Dorsolateral prefrontal cortex (tissue), 120 donors: ENCODE measurements at regions of chr17 and their contacts with region 1.

Region 1: DNA sequence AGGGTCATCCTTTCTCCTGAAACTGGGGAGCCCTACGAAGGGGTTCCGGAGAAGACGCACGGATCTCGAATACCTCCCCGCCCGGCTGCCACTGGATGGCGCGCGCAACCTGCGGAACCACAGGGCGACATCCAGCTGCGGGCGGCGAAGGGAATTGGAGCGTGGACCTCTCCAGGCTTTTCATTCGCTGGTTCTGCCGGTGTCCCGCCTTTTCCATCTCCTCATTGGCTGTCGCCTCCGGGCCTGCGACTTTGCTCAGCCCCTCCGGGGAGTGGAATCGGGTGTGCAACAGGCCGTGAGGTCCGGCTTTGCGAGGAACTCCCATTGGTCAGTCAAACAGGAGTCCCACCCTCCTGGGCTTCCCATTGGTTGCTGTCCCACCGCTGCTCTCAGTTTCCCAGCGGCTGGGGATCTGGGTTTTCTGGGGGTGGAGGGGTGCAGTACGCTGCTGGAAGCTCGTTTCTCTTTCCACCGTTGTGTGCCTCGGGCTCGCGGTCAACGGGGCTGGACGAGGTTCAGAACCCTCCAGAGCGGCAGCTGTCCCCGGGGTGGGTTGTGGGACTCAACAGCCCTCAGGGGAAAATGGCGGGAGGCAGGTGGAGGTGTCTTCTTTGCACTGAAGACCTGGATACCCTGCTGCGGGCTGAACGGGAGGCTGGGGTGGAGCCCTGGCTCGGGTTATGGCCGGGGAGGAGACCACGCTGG is 14.5 kb downstream of the OR1D5 start:
- DNase-seq: peak; percentile 95 to 99 (median 98)
- H3K4me3 ChIP-seq: peak overlapping the region; percentile 35 to 96 (median 83)
- H3K27ac ChIP-seq: peak overlapping the region in 57 of 59 donors; percentile 1 to 92 (median 82)
- H3K27me3 ChIP-seq: no peaks in the 10 kb centered on the region
- CTCF ChIP-seq: peak; percentile 73 to 99 (median 92)

Region 2: GRCh38 chr17:2711601-2712299 is 337.2 kb before region 1 on chr17 and contains the start of gene CLUH:
- intact Hi-C with region 1: loop called in 1 of 2 experiments (anchors 5 kb)
- DNase-seq: peak; percentile 91 to 97 (median 94)
- H3K4me3 ChIP-seq: peak within 1 kb of the TSS; percentile 55 to 98 (median 89)
- H3K27ac ChIP-seq: peak within 1 kb of the TSS; percentile 35 to 96 (median 87)
- H3K27me3 ChIP-seq: no peaks in the 10 kb centered on the region
- CTCF ChIP-seq: peak in 41 of 56 donors; percentile 7 to 59 (median 36)
- total RNA-seq, gene CLUH: 46.1 to 95.4 (median 67.1) TPM

Region 3: DNA sequence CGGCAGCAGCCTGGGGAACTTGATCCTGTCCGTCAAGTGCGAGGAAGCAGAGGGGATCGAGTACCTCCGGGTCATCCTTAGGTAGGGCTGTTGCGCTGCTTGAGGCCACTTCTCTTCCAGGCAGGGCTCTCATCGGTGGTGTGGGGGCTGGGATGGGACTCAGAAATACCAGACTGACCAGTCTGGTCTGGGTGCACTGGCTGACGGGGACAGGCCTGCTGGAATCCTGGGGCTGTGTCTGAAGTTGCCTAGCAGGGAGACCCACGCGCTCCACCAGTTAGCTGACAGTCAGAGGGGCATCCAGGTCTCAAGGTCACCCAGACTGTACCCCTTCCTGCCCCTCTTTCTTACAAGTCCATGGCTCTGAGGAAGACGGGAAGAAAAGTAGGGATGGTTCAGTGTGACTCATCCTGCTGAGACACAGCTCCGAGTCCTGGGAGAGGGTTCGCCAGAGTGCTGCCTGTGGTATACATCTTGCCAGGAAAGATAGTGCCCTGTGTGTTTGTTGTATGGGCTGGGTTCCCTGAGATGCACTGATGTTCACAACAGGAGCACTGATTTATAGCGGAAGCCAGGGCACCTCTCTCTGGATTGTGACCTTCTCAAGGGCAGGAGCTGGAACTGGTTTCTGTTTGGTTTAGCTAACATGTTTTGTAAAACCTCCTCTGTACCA is 83.2 kb before region 1 on chr17:
- intact Hi-C with region 1: no loop called
- DNase-seq: peak in 1 of 10 donors; percentile 16
- H3K4me3 ChIP-seq: no peak overlapping the region
- H3K27ac ChIP-seq: peak overlapping the region in 3 of 59 donors; percentile 11 to 53 (median 27)
- H3K27me3 ChIP-seq: no peaks in the 10 kb centered on the region
- CTCF ChIP-seq: no peak

Region 4: GRCh38 chr17:3636154-3636907 is 587.4 kb after region 1 on chr17 and contains the starts of genes CTNS and SHPK:
- intact Hi-C with region 1: loop called (anchors 5 to 10 kb)
- DNase-seq: peak; percentile 95 to 99 (median 98)
- H3K4me3 ChIP-seq: peak within 1 kb of the TSS; percentile 66 to 100 (median 97)
- H3K27ac ChIP-seq: peak within 1 kb of the TSS; percentile 86 to 100 (median 98)
- H3K27me3 ChIP-seq: no peaks in the 10 kb centered on the region
- CTCF ChIP-seq: peak in 17 of 56 donors; percentile 3 to 45 (median 27)
- total RNA-seq, gene CTNS: 5.0 to 16.5 (median 9.6) TPM
- total RNA-seq, gene SHPK: 7.4 to 28.1 (median 15.1) TPM

Region 5: GRCh38 chr17:3647769-3648555 is 599.0 kb after region 1 on chr17:
- intact Hi-C with region 1: loop called in 1 of 2 experiments (anchors 10 kb)
- DNase-seq: peak; percentile 25 to 84 (median 80)
- H3K4me3 ChIP-seq: no peak overlapping the region
- H3K27ac ChIP-seq: peak overlapping the region in 22 of 59 donors; percentile 2 to 78 (median 37)
- H3K27me3 ChIP-seq: no peaks in the 10 kb centered on the region
- CTCF ChIP-seq: peak in 55 of 56 donors; percentile 11 to 78 (median 59)

Region 6: GRCh38 chr17:3668279-3669085 is 619.6 kb after region 1 on chr17 and contains the starts of genes EMC6 and TAX1BP3:
- intact Hi-C with region 1: loop called in 1 of 2 experiments (anchors 10 kb)
- DNase-seq: peak; percentile 98 to 99 (median 99)
- H3K4me3 ChIP-seq: peak within 1 kb of the TSS; percentile 66 to 100 (median 97)
- H3K27ac ChIP-seq: peak within 1 kb of the TSS; percentile 69 to 99 (median 95)
- H3K27me3 ChIP-seq: no peaks in the 10 kb centered on the region
- CTCF ChIP-seq: peak in 18 of 56 donors; percentile 4 to 53 (median 26)
- total RNA-seq, gene EMC6: 13.3 to 35.5 (median 25.3) TPM
- total RNA-seq, gene TAX1BP3: 19.0 to 75.8 (median 38.4) TPM

Region 7: GRCh38 chr17:3723556-3724369 is 674.8 kb after region 1 on chr17 and contains the start of gene HASPIN:
- intact Hi-C with region 1: loop called in 1 of 2 experiments (anchors 5 kb)
- DNase-seq: peak; percentile 72 to 93 (median 82)
- H3K4me3 ChIP-seq: peak within 1 kb of the TSS; percentile 64 to 100 (median 93)
- H3K27ac ChIP-seq: peak within 1 kb of the TSS in 57 of 59 donors; percentile 46 to 95 (median 83)
- H3K27me3 ChIP-seq: no peaks in the 10 kb centered on the region
- CTCF ChIP-seq: peak in 46 of 56 donors; percentile 1 to 69 (median 40)
- total RNA-seq, gene HASPIN: 0.13 to 0.31 (median 0.18) TPM in 26 of 120 experiments, not detected in the others